Dorsolateral prefrontal cortex (tissue), 120 donors: ENCODE measurements at regions of chr6 and their contacts with region 1.

Region 1: DNA sequence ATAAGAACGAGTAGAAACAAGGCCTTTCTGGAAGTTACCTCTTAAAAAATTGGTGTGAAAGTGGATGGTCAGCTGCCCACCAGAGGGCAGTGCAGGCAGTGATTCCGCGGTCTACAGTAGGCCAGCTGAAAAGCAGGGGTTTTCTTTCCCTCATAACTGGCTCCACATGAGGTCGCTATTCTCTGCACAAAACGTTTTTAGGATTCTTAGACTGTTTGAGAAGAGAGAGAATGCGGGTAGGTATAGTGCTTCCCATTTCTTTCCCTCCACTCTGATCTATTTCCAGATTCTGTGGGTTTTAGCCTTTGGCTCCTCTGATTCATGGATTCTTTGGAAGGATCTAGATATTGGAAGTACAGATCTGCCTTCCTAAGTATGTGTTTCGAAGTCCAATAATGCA is 14.2 kb downstream of the FIG4 start:
- DNase-seq: peak; percentile 70 to 84 (median 80)
- H3K4me3 ChIP-seq: no peak overlapping the region
- H3K27ac ChIP-seq: peak overlapping the region in 14 of 59 donors; percentile 5 to 85 (median 34)
- H3K27me3 ChIP-seq: no peaks in the 10 kb centered on the region
- CTCF ChIP-seq: peak; percentile 98 to 100 (median 100)

Region 2: GRCh38 chr6:109428889-109429477 is 276.3 kb before region 1 on chr6:
- intact Hi-C with region 1: no loop called
- DNase-seq: peak in 1 of 10 donors; percentile 29
- H3K4me3 ChIP-seq: peak overlapping the region in 1 of 59 donors; percentile 22
- H3K27ac ChIP-seq: peak overlapping the region in 4 of 59 donors; percentile 13 to 75 (median 39)
- H3K27me3 ChIP-seq: no peaks in the 10 kb centered on the region
- CTCF ChIP-seq: no peak

Region 3: DNA sequence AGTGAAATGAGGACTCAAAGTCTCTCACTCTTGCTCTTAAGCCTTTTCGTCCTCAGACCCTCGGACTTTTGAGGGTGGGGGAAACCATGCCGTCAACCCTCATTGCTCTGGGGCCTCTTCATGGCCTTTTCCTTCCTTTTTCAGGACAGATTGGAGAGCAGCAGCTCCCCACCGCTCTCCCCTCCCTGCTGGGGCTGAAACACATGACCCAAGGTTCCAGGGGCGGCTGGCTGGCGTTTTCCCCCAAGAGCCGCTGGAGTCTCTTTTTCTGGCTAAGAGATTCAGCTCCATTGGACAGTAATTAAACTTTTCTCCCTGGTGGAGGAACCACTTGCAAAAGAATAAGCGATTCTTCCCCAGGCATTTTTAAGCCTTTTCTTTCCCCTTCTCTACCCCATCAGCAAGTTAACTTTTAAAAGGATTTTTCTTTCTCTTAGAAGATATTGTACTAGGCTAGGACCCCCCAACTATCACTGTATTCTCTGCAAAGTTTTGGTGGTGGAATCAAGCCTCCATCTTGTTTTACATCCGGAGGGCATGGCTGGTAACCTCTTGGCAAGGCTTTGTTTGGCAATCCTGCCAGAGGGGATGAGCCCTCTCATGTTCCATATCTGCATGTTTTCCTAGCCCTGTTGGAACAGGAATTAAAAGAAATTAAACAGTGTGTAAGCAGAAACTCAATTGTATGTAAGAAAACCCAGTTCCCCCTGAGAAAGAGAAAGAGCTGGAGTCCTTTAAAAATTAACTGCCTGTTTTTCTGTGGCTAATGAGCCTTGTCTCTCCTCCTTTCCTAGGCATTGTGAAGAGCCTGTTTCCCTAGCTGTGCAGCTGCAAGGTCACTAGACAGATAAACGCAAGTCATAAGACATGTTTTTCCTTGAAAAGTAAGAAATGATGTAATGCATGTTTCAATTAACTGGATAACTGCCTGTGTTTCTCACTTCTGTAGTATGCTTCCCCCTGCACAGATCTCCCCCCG is 172.1 kb after region 1 on chr6:
- intact Hi-C with region 1: loop called in 1 of 2 experiments (anchors 10 kb)
- DNase-seq: no peak
- H3K4me3 ChIP-seq: no peak overlapping the region
- H3K27ac ChIP-seq: no peak overlapping the region
- H3K27me3 ChIP-seq: no peaks in the 10 kb centered on the region
- CTCF ChIP-seq: no peak

Region 4: GRCh38 chr6:110039364-110039980 is 334.2 kb after region 1 on chr6:
- intact Hi-C with region 1: loop called (anchors 1 to 2 kb)
- DNase-seq: peak; percentile 81 to 92 (median 86)
- H3K4me3 ChIP-seq: peak overlapping the region in 40 of 59 donors; percentile 2 to 53 (median 26)
- H3K27ac ChIP-seq: peak overlapping the region in 39 of 59 donors; percentile 3 to 80 (median 56)
- H3K27me3 ChIP-seq: no peaks in the 10 kb centered on the region
- CTCF ChIP-seq: peak; percentile 67 to 96 (median 90)

Region 5: GRCh38 chr6:110053395-110054240 is 348.4 kb after region 1 on chr6:
- intact Hi-C with region 1: loop called in 1 of 2 experiments (anchors 5 kb)
- DNase-seq: no peak
- H3K4me3 ChIP-seq: peak overlapping the region in 1 of 59 donors; percentile 21
- H3K27ac ChIP-seq: no peak overlapping the region
- H3K27me3 ChIP-seq: peaks cover 0 to 2% (median 0%) of the 10 kb centered on the region in 45 donors
- CTCF ChIP-seq: peak; percentile 43 to 90 (median 74)